Heart right ventricle (tissue), 16 donors: ENCODE measurements at regions of chr1 and their contacts with region 1.

Region 1: GRCh38 chr1:47569681-47570470 is 132.0 kb downstream of the FOXD2 start:
- DNase-seq: peak in 1 of 2 donors; percentile 42
- ATAC-seq: peak; percentile 61 to 92 (median 77)
- H3K4me3 ChIP-seq: no peak overlapping the region
- H3K27ac ChIP-seq: no peak overlapping the region
- H3K4me1 ChIP-seq: peaks cover 0 to 17% (median 8%) of the 10 kb centered on the region in 9 donors
- H3K27me3 ChIP-seq: peaks cover 0 to 28% (median 0%) of the 10 kb centered on the region in 7 donors
- CTCF ChIP-seq: peak in 7 of 9 donors; percentile 42 to 68 (median 46)

Region 2: GRCh38 chr1:47437447-47438164 is 132.3 kb before region 1 on chr1 and contains the start of gene FOXD2:
- intact Hi-C with region 1: loop called in 1 of 10 experiments (anchors 5 kb)
- DNase-seq: peak; percentile 83 to 88
- ATAC-seq: peak; percentile 92 to 95 (median 94)
- H3K4me3 ChIP-seq: peak within 1 kb of the TSS; percentile 46 to 87 (median 70)
- H3K27ac ChIP-seq: peak within 1 kb of the TSS in 9 of 10 donors; percentile 36 to 94 (median 74)
- H3K4me1 ChIP-seq: peaks cover 9 to 49% (median 36%) of the 10 kb centered on the region in 9 donors
- H3K27me3 ChIP-seq: peaks cover 23 to 99% (median 94%) of the 10 kb centered on the region in 7 donors
- CTCF ChIP-seq: peak; percentile 95 to 99 (median 98)
- total RNA-seq, gene FOXD2: 0.05 to 0.14 (median 0.07) TPM in 4 of 10 donors, not detected in the others

Region 3: DNA sequence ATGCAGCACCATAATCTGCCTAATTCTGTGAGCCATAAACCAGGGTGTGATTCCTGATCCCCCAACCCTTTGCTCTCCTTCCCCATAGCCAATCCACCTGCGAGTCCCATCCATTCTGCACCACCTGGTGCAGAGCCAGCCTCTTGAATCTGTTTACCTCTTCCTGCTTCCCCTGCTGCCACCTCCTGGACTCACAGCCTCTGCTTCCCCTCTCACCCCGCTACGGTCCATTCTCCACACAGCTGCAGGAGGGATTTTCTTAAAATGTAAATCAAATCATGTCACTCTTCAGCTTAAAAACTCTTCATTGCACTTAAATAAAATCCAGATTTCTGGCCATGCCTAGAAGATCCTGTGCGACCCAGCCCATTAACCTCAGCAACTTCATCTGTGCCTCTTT is 54.7 kb after region 1 on chr1:
- intact Hi-C with region 1: no loop called
- DNase-seq: peak in 1 of 2 donors; percentile 2
- ATAC-seq: no peak
- H3K4me3 ChIP-seq: no peak overlapping the region
- H3K27ac ChIP-seq: no peak overlapping the region
- H3K4me1 ChIP-seq: peaks cover 0 to 10% (median 0%) of the 10 kb centered on the region in 9 donors
- H3K27me3 ChIP-seq: peaks cover 0 to 16% (median 7%) of the 10 kb centered on the region in 7 donors
- CTCF ChIP-seq: peak in 5 of 9 donors; percentile 17 to 34 (median 27)